Activated CD8-positive, alpha-beta T cell treated with anti-CD3 and anti-CD28 coated beads for 36 hours (primary cell): ENCODE measurements at regions of chr2 and their contacts with region 1.

Region 1: GRCh38 chr2:207974216-207974605 is 51.1 kb downstream of the PLEKHM3 start:
- DNase-seq: no peak
- ATAC-seq: no peak
- H3K4me3 Mint-ChIP-seq: no peak overlapping the region
- H3K27ac Mint-ChIP-seq: no peak overlapping the region
- H3K4me1 Mint-ChIP-seq: peaks cover 15% of the 10 kb centered on the region
- H3K27me3 Mint-ChIP-seq: no peaks in the 10 kb centered on the region
- CTCF ChIP-seq: no peak

Region 2: DNA sequence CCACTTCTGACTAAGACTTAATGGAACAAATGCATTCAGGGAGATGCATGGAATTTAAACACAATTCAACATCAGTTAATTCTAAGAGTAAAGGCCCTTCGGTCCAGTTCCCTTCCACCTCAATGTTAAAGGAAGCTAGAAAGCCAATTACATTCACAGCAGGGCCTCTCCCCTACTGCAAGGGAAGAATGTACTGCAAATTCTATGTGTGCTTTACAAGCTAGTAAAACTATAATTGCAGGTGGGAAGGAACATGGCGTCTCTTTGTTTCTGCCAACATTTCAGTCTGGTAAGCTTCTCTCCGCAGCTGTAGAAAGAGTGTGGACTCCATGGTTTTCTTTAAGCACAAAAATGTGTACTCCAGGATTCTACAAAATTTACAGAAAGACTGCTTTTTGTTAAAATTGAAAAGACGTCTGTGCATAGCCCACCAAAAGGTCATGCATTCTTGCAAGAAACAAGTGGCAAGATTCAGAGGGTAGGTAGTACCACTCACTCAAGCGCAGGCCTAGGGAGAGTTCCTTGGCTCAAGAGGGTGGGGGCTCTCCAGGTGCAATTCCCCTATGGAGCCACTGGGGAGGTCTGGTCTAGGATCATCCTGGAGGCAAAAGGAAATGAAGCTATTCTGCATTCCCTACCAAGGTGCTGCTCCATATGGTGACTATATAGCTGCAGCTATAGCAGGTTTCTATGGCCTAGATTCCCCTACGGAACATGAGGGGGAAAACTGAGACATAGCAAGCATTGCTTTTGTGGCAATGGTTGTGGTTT is 77.5 kb before region 1 on chr2:
- CTCF ChIA-PET with region 1: no interaction called
- POLR2A ChIA-PET with region 1: no interaction called
- intact Hi-C with region 1: no loop called
- DNase-seq: no peak
- ATAC-seq: no peak
- H3K4me3 Mint-ChIP-seq: no peak overlapping the region
- H3K27ac Mint-ChIP-seq: no peak overlapping the region
- H3K4me1 Mint-ChIP-seq: no peaks in the 10 kb centered on the region
- H3K27me3 Mint-ChIP-seq: no peaks in the 10 kb centered on the region
- CTCF ChIP-seq: no peak

Region 3: DNA sequence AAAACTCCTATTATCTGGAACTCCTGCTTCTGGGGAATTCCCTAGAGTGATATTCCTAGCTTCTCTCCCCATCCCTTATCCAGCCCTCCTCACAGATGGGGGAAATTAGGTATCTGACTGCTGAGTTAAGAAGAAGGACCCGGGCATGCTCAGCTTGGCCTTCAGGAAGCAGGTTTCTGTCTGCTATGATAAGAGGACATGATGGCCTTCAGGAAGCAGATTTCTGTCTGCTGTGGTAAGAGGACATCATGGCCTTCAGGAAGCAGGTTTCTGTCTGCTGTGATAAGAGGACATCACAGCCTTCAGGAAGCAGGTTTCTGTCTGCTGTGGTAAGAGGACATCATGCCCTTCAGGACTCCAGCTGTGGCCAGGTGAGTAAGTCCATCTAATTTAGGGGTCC is 14.1 kb before region 1 on chr2:
- CTCF ChIA-PET with region 1: interaction called, 13 read pairs
- POLR2A ChIA-PET with region 1: interaction called, 3 read pairs
- intact Hi-C with region 1: no loop called
- DNase-seq: no peak
- ATAC-seq: no peak
- H3K4me3 Mint-ChIP-seq: no peak overlapping the region
- H3K27ac Mint-ChIP-seq: no peak overlapping the region
- H3K4me1 Mint-ChIP-seq: no peaks in the 10 kb centered on the region
- H3K27me3 Mint-ChIP-seq: no peaks in the 10 kb centered on the region
- CTCF ChIP-seq: no peak